ENCODE measurements at regions of chr12 and their contacts with region 1.

Region 1: GRCh38 chr12:53065975-53066931 is 12.9 kb downstream of the SPRYD3 start:
- DNase-seq: peak; percentile 87 to 91 (median 91)
- ATAC-seq: peak; percentile 44 to 56
- H3K4me3 ChIP-seq: no peak overlapping the region
- H3K27ac ChIP-seq: peak overlapping the region; percentile 76
- H3K4me1 ChIP-seq: peaks cover 17% of the 10 kb centered on the region
- H3K27me3 ChIP-seq: no peaks in the 10 kb centered on the region

Region 2: DNA sequence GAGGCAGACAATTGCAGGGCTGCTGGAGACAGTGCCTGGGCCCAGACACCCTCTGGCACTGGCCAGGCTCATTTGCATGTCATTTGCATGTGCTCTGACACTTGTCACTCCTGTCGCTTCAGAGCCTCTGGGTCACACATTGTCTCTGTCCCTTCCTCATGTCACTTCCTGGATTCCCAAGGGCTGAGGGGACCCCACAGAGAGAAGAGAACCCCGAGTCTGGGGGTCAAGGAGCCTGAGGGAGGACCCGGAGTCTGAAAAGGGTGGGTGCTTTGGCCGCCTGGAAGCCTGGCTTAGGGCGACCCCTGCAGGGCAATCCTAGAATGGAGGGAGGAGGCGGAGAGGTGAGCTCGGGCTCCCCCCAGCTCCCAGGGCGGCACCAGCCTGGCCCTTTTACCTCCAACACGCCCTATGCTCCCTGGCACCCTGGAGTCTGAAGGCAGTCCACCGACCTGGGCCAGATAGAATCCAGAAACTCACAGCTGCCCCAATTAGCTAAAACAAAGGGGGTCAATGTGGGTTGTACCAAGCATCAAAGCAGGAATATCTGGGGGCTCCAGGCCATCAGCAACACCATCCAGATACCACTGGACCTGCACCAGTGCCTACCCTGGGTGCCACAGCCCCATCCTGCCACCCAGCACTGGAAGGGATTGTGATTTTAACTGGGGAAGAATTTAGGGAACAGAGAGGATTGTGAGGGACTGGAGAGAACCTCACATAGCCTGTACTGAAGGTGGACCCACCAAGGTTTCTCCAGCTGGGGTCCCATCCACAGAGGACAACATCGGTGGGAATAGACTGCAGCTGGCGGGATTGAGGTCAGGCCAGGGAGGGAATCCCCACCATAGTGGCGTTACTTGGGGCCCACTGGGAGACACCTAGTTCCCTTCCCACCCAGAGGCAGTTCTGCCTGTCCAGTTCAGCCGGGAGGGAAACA is 195.6 kb before region 1 on chr12:
- intact Hi-C with region 1: no loop called
- DNase-seq: peak; percentile 58 to 84 (median 83)
- ATAC-seq: peak in 1 of 2 donors; percentile 22
- H3K4me3 ChIP-seq: no peak overlapping the region
- H3K27ac ChIP-seq: no peak overlapping the region
- H3K4me1 ChIP-seq: peaks cover 6% of the 10 kb centered on the region
- H3K27me3 ChIP-seq: no peaks in the 10 kb centered on the region

Region 3: GRCh38 chr12:53098982-53099651 is 32.9 kb after region 1 on chr12:
- intact Hi-C with region 1: loop called in 3 of 4 experiments (anchors 2 kb)
- DNase-seq: peak; percentile 95 to 97 (median 96)
- ATAC-seq: peak; percentile 79 to 84
- H3K4me3 ChIP-seq: peak overlapping the region; percentile 17
- H3K27ac ChIP-seq: peak overlapping the region; percentile 69
- H3K4me1 ChIP-seq: peaks cover 6% of the 10 kb centered on the region
- H3K27me3 ChIP-seq: no peaks in the 10 kb centered on the region

Region 4: GRCh38 chr12:53190108-53190729 is 124.0 kb after region 1 on chr12:
- intact Hi-C with region 1: loop called (anchors 5 to 10 kb)
- DNase-seq: peak; percentile 82 to 88 (median 85)
- ATAC-seq: peak; percentile 72 to 73
- H3K4me3 ChIP-seq: no peak overlapping the region
- H3K27ac ChIP-seq: no peak overlapping the region
- H3K4me1 ChIP-seq: no peaks in the 10 kb centered on the region
- H3K27me3 ChIP-seq: no peaks in the 10 kb centered on the region

Region 5: DNA sequence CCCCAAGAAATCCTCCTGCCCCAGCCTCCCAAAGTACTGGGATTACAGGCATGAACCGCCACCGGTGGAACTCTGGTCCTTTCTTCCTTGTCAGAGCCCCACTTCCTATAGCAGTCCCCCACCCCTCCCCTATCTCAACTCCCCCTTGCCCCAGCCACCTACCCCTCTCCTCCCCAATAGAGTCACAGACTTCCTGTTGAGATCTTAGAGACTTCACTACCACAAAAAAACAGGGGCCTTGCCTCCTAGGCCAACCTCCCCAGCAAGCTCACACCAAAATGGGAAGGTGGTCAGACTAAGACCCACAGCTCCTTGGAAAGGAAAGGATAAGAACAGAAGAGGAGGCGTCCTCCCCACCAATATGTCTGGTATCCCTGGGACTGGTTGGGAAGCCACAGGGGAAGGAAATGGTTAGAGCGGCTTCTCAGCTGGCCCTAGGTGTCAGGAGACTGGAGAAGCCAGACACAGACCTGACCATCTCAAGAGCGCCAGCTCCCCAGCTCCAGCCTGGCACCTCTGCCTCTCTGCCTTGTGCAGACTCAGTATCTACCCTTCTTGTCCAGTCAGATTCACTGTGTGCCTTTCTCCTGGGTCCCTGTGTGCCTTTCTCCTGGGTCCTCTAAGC is 132.3 kb after region 1 on chr12:
- intact Hi-C with region 1: loop called in 3 of 4 experiments (anchors 5 to 10 kb)
- DNase-seq: no peak
- ATAC-seq: no peak
- H3K4me3 ChIP-seq: no peak overlapping the region
- H3K27ac ChIP-seq: no peak overlapping the region
- H3K4me1 ChIP-seq: no peaks in the 10 kb centered on the region
- H3K27me3 ChIP-seq: no peaks in the 10 kb centered on the region

Measured in right cardiac atrium (tissue), 5 donors.